GM12878 (cell line): ENCODE measurements at regions of chr4 and their contacts with region 1.

Region 1: DNA sequence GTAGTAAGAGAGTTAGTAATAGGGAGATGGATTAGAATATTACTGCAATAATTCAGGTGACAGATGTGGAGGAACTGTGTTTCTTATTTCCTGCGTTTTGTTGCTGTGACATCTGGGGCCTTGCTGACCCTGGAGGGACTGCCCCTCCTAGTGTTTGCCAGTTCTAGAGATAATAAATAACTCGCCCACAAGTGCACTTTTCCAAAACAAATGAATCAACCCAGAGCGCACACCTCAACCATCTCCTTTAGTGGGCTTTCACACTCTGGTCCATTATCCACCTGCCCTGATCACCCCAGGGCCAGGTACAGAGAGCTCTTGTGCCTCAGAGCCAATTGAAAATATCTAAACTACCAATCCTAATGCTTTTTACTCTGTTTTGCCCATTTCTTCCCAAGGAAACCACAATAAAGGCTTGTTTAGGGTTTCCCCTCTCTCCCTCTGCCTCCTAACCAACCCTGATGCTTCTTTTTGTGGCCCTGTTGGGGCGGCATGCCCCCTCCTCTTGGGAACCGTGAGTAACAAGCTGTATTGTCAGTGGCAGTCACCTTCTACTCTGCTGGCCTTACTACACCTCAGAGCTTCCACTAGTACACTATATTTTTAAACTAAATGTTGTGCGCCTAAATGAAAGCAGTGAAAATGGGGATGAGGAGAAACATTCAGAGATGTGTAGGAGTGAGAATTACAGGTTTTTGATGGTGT is 270.5 kb downstream of the TENM3 start:
- DNase-seq: no peak
- ATAC-seq: peak; percentile 62
- H3K4me3 ChIP-seq: no peak overlapping the region
- H3K27ac ChIP-seq: no peak overlapping the region
- H3K4me1 ChIP-seq: no peaks in the 10 kb centered on the region
- H3K27me3 ChIP-seq: no peaks in the 10 kb centered on the region; a peak in 2 of 4 replicates
- CTCF ChIP-seq: no peak
- EP300 ChIP-seq: no peak
- POLR2A ChIP-seq: no peak
- RAD21 ChIP-seq: no peak

Region 2: GRCh38 chr4:182531555-182532162 is 17.9 kb after region 1 on chr4:
- CTCF ChIA-PET with region 1: interaction called, 5 read pairs
- POLR2A ChIA-PET with region 1: no interaction called
- RAD21 ChIA-PET with region 1: interaction called, 4 read pairs
- SMC1A ChIA-PET with region 1: interaction called, 11 read pairs
- in situ Hi-C with region 1: no loop called
- intact Hi-C with region 1: no loop called
- DNase-seq: no peak
- ATAC-seq: no peak
- H3K4me3 ChIP-seq: no peak overlapping the region
- H3K27ac ChIP-seq: no peak overlapping the region
- H3K4me1 ChIP-seq: no peaks in the 10 kb centered on the region
- H3K27me3 ChIP-seq: no peaks in the 10 kb centered on the region
- CTCF ChIP-seq: no peak
- EP300 ChIP-seq: no peak
- POLR2A ChIP-seq: no peak
- RAD21 ChIP-seq: no peak

Region 3: DNA sequence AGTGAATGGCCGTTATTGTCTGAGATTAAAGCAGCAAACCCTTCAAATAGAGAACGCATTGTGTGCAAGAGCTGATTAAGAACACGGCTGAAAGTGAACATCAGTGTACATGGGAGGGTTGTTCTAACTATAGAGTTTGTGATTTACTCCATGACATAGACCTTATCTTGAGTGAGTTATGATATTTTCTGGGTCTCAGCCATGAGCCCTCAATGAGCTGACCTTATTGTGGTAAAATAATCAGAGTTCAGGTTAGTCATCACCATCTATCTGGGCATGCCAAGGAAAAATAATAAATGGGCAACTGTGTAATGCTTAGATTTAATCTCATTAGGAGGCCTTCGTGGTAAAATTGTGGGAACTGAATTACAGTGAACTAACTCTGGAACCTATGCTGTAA is 841.7 kb after region 1 on chr4:
- CTCF ChIA-PET with region 1: no interaction called
- POLR2A ChIA-PET with region 1: no interaction called
- RAD21 ChIA-PET with region 1: no interaction called
- SMC1A ChIA-PET with region 1: no interaction called
- in situ Hi-C with region 1: no loop called
- intact Hi-C with region 1: no loop called
- DNase-seq: no peak
- ATAC-seq: no peak
- H3K4me3 ChIP-seq: no peak overlapping the region
- H3K27ac ChIP-seq: no peak overlapping the region
- H3K4me1 ChIP-seq: no peaks in the 10 kb centered on the region
- H3K27me3 ChIP-seq: no peaks in the 10 kb centered on the region
- CTCF ChIP-seq: no peak
- EP300 ChIP-seq: no peak
- POLR2A ChIP-seq: no peak
- RAD21 ChIP-seq: no peak